ENCODE measurements at regions of chr9 and their contacts with region 1.

Region 1: GRCh38 chr9:4327504-4328191 is 27.8 kb upstream of the GLIS3 start:
- DNase-seq: peak; percentile 19
- ATAC-seq: no peak
- H3K4me3 Mint-ChIP-seq: no peak overlapping the region
- H3K27ac Mint-ChIP-seq: no peak overlapping the region
- H3K4me1 Mint-ChIP-seq: peaks cover 33% of the 10 kb centered on the region
- H3K27me3 Mint-ChIP-seq: no peaks in the 10 kb centered on the region
- CTCF ChIP-seq: no peak

Region 2: DNA sequence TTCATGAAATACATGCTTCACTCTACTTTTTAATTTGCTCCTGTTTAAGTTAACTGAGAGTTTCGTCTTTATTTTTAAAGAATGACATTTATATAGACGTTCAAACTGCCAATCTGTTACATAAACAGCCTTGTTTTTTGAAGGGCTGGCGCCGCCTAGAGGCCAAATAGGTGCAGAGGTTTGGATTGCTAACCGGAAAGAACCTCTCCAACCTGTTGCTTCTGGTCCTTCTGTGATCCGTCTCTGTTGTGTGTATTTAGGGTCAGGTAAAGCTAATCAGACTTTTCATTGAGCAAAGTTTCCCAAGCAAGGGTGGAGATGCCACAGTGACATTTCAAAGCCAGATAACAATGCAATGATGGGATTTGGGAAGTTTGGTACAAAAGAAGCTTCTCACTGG is 11.7 kb after region 1 on chr9:
- CTCF ChIA-PET with region 1: interaction called, 51 read pairs
- POLR2A ChIA-PET with region 1: interaction called, 3 read pairs
- intact Hi-C with region 1: no loop called
- DNase-seq: peak; percentile 95
- ATAC-seq: peak; percentile 95
- H3K4me3 Mint-ChIP-seq: peak overlapping the region; percentile 47
- H3K27ac Mint-ChIP-seq: peak overlapping the region; percentile 60
- H3K4me1 Mint-ChIP-seq: peaks cover 12% of the 10 kb centered on the region
- H3K27me3 Mint-ChIP-seq: no peaks in the 10 kb centered on the region
- CTCF ChIP-seq: peak; percentile 88